ENCODE measurements at regions of chr5 and their contacts with region 1.

Region 1: GRCh38 chr5:180860887-180861822 is at the start of gene ZFP62:
- DNase-seq: peak; percentile 94 to 95
- ATAC-seq: peak; percentile 98 to 99 (median 98)
- H3K4me3 ChIP-seq: peak within 1 kb of the TSS; percentile 77
- H3K27ac ChIP-seq: peak within 1 kb of the TSS; percentile 83
- H3K4me1 ChIP-seq: peaks cover 12% of the 10 kb centered on the region
- H3K27me3 ChIP-seq: peaks cover 0 to under 1% (median 0%) of the 10 kb centered on the region in 3 donors
- CTCF ChIP-seq: no peak
- total RNA-seq, gene ZFP62: 11.0 to 14.6 (median 12.8) TPM

Region 2: GRCh38 chr5:180784497-180785097 is 76.6 kb before region 1 on chr5:
- intact Hi-C with region 1: loop called in 1 of 2 experiments (anchors 5 kb)
- DNase-seq: peak; percentile 81 to 90
- ATAC-seq: peak; percentile 78 to 91 (median 84)
- H3K4me3 ChIP-seq: peak overlapping the region; percentile 15
- H3K27ac ChIP-seq: no peak overlapping the region
- H3K4me1 ChIP-seq: peaks cover 20% of the 10 kb centered on the region
- H3K27me3 ChIP-seq: no peaks in the 10 kb centered on the region
- CTCF ChIP-seq: peak; percentile 82

Region 3: DNA sequence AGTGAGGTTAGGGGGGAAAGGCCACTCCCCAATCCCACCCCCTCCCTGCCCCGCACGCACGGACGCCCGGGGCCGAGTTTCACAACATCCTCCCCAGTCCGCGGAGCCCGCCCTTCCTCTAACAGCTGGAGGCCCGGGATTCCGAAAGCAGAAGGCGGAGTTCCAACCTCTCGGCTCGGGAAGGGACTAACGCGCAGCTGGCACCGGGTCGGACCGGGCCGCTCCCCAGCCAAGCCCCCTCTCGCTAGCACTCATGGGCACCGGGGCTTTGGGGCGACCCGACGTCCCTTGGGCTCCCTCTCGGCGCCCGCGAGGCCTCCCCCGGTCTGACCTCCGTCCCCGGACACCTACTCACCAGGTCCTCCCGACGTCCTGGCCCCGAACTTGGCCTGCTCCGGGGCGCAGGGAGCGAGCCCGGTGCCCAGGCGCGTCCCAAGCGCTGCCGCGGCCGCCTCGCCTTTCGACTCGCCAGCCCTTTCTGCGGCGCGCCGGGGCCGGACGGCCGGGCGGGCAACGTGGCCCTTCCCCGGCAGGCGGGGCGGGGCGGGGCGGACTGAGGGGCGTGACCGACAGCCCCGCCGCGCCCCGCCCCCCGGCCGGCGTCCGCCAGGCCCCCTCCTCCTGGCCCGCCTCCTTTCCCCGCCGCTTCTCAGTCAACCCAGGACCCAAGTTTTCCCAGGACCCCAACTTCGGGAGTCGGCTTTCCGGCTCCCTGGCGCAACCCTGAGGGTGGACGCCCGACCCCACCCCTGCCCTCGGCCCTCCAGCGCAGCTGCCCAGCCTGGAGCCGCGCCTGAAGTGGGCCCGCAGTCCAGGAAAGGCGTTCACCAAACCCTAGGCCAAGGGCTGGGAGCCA is 58.6 kb before region 1 on chr5 and contains the start of gene MGAT1:
- intact Hi-C with region 1: loop called (anchors 5 kb)
- DNase-seq: peak; percentile 92 to 95
- ATAC-seq: peak; percentile 88 to 90 (median 90)
- H3K4me3 ChIP-seq: peak within 1 kb of the TSS; percentile 100
- H3K27ac ChIP-seq: peak within 1 kb of the TSS; percentile 99
- H3K4me1 ChIP-seq: peaks cover 89% of the 10 kb centered on the region
- H3K27me3 ChIP-seq: no peaks in the 10 kb centered on the region
- CTCF ChIP-seq: no peak
- total RNA-seq, gene MGAT1: 53.6 to 92.3 (median 70.0) TPM

Region 4: DNA sequence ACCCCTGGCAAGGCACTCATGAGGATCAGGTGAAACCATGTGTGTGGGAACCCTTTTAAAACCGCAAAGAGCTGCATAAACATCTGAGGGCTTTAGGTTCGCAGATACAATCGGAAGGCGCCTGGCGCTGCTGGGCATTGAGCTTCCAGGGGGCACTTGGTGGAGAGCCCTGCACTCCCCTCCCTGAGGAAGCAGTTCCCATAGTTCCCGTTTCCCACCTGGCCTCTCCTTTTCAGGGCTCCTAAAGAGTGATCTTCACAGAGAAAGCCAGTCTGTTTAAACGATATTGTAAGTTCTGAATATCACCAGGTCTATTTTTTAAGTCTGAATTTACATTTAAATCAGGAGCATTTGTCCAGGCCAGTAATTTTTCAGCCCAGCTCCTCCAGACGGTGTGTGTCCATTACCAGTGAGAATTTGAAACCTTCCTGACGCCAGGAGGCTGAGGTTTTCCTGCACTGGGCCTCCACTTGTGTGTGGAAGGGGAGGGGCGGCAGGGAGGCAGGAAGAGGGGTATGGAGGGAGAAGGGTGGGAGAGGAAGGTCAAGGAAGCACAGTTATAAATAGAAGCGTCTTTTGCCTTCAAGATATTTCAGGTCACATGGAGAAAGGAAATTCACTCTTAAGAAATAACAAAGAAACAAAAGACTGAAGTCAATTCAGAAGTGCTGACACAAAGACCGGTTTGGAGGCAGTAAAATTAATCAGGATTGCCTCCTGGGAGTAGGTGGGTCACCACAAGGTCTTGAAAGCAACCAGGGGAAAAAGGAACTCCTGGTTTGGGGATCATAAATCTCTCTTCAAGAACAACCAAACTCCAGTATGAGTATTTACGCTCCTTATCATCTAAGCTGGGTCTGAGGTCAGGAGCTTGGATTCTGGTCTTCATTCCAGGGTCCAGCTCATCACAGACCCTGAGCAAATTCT is 44.3 kb before region 1 on chr5:
- intact Hi-C with region 1: loop called in 1 of 2 experiments (anchors 5 kb)
- DNase-seq: no peak
- ATAC-seq: peak; percentile 36 to 66 (median 46)
- H3K4me3 ChIP-seq: peak overlapping the region; percentile 28
- H3K27ac ChIP-seq: peak overlapping the region; percentile 74
- H3K4me1 ChIP-seq: peaks cover 26% of the 10 kb centered on the region
- H3K27me3 ChIP-seq: no peaks in the 10 kb centered on the region
- CTCF ChIP-seq: no peak

Region 5: DNA sequence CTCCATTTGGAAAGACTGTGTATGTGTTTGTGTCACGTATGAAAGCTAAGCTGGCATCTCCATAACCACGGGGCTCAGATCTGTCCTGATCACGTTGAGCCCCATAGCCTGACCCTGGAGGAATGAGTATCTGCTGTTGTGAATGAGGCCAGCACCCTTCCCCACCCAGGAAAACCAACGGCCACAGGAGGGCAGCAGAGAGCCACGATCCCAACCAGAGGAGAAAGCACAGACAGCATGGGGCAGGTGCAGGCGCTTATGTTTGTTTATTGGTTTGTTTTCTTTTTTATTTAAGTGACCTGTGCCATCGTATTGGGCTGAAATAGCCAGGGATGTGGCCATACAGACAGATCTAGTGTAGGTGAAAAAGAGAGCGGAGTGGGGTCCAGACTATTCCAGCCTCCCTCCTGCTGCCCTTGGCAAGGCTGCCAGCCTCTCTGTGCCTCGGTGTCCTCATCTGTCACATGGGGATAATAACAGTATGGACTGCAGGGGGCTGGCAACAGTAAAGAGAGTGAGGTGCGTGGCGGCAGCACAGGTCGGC is 298.2 kb after region 1 on chr5:
- intact Hi-C with region 1: loop called (anchors 10 kb)
- DNase-seq: peak; percentile 87 to 93
- ATAC-seq: peak; percentile 90 to 97 (median 92)
- H3K4me3 ChIP-seq: no peak overlapping the region
- H3K27ac ChIP-seq: no peak overlapping the region
- H3K4me1 ChIP-seq: peaks cover 5% of the 10 kb centered on the region
- H3K27me3 ChIP-seq: peaks cover 0 to 2% (median 2%) of the 10 kb centered on the region in 3 donors
- CTCF ChIP-seq: peak; percentile 83